Right lobe of liver (tissue), 6 donors: ENCODE measurements at regions of chr20 and their contacts with region 1.

Region 1: GRCh38 chr20:57596998-57597939 is 23.0 kb downstream of the ZBP1 start:
- DNase-seq: peak; percentile 75 to 78 (median 78)
- ATAC-seq: peak; percentile 43 to 57 (median 51)
- H3K4me3 ChIP-seq: no peak overlapping the region
- H3K27ac ChIP-seq: no peak overlapping the region
- H3K4me1 ChIP-seq: peaks cover 0 to 23% (median 11%) of the 10 kb centered on the region in 4 donors
- H3K27me3 ChIP-seq: no peaks in the 10 kb centered on the region
- CTCF ChIP-seq: peak; percentile 90 to 96 (median 94)
- POLR2A ChIP-seq: no peak

Region 2: DNA sequence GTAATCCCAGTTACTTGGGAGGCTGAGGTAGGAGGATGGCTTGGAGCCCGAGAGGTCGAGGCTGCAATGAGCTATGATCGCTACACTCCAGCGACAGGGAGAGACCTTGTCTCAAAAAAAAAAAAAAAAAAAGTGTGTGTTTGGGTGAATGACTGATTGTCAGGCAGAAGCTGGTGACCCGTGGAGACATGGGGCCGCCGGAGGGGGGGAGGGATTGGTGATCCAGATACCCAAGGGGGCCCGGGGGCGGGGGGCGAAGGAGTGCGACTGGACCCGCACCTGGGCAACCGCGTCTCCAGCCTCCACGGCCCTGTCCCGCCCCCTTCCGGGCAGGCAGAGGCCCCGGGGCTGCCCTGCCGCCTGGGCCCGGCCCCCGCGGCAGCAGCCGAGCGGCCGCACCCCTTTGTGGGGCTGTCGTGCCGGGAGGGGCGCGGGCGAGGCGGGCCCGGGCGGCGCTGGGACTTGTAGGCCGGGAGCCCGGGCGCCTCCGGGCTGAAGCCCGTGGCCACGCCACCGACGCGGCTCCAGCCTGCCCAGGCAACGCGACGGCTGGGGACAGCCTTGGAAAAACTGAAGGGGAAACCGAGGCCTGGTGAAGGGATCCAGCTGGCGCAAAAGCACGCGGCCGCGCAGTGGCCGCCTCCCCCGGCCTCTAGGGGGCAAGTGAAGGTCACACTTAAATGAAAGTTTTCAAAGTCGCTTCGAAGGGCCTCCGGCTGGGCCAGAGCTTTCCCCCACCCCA is 208.1 kb before region 1 on chr20:
- intact Hi-C with region 1: loop called in 1 of 2 experiments (anchors 10 kb)
- DNase-seq: peak; percentile 89
- ATAC-seq: peak; percentile 82 to 89 (median 84)
- H3K4me3 ChIP-seq: peak overlapping the region; percentile 20 to 53 (median 32)
- H3K27ac ChIP-seq: peak overlapping the region in 2 of 3 donors; percentile 31 to 43
- H3K4me1 ChIP-seq: peaks cover 0 to 19% (median 0%) of the 10 kb centered on the region in 4 donors
- H3K27me3 ChIP-seq: no peaks in the 10 kb centered on the region
- CTCF ChIP-seq: peak in 2 of 4 donors; percentile 19 to 35
- POLR2A ChIP-seq: peak; percentile 46

Region 3: DNA sequence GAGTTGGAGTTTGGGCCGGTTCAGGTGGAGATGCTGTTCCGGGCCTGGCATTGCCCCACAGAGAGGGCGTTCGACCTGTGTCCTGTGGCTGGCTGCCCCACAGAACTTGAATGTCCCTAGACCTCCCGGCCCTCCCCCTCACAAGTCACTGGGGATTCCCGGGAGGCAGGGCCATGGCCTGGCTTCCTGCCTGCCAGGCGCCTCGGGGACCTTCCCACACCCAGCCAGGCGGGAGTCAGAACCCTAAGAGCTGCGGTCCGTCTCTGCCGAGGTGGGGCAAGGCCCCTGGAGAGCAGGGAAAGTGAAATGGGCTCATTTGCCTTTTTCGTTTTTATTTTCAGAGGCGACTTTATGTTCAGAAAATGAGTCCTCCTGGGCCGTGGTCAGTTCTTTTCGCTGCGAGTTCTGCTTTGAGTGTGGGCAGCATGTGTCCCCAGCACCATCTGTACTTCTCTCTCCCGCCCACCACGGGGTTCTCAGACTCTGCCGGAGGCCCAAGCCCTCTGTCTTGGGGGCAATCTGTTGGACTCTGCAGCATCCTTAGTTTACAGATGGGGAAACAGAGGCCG is 197.6 kb before region 1 on chr20:
- intact Hi-C with region 1: loop called in 1 of 2 experiments (anchors 10 kb)
- DNase-seq: peak in 2 of 3 donors; percentile 64 to 68
- ATAC-seq: peak; percentile 7 to 79 (median 46)
- H3K4me3 ChIP-seq: no peak overlapping the region
- H3K27ac ChIP-seq: no peak overlapping the region
- H3K4me1 ChIP-seq: no peaks in the 10 kb centered on the region
- H3K27me3 ChIP-seq: no peaks in the 10 kb centered on the region
- CTCF ChIP-seq: no peak
- POLR2A ChIP-seq: no peak

Region 4: GRCh38 chr20:57514273-57514751 is 83.0 kb before region 1 on chr20:
- intact Hi-C with region 1: loop called (anchors 5 kb)
- DNase-seq: peak; percentile 63 to 77 (median 74)
- ATAC-seq: peak; percentile 92 to 97 (median 94)
- H3K4me3 ChIP-seq: no peak overlapping the region
- H3K27ac ChIP-seq: no peak overlapping the region
- H3K4me1 ChIP-seq: no peaks in the 10 kb centered on the region
- H3K27me3 ChIP-seq: no peaks in the 10 kb centered on the region
- CTCF ChIP-seq: peak; percentile 76 to 86 (median 79)
- POLR2A ChIP-seq: no peak

Region 5: GRCh38 chr20:57526087-57526884 is 71.0 kb before region 1 on chr20:
- intact Hi-C with region 1: no loop called
- DNase-seq: peak; percentile 45 to 66 (median 63)
- ATAC-seq: peak; percentile 2 to 48 (median 11)
- H3K4me3 ChIP-seq: no peak overlapping the region
- H3K27ac ChIP-seq: peak overlapping the region in 2 of 3 donors; percentile 98 to 99
- H3K4me1 ChIP-seq: peaks cover 0 to 30% (median 5%) of the 10 kb centered on the region in 4 donors
- H3K27me3 ChIP-seq: no peaks in the 10 kb centered on the region
- CTCF ChIP-seq: no peak
- POLR2A ChIP-seq: no peak

Region 6: GRCh38 chr20:58209652-58210397 is 612.6 kb after region 1 on chr20:
- intact Hi-C with region 1: loop called (anchors 5 kb)
- DNase-seq: peak; percentile 81 to 89 (median 86)
- ATAC-seq: peak; percentile 94 to 99 (median 98)
- H3K4me3 ChIP-seq: no peak overlapping the region
- H3K27ac ChIP-seq: no peak overlapping the region
- H3K4me1 ChIP-seq: no peaks in the 10 kb centered on the region
- H3K27me3 ChIP-seq: no peaks in the 10 kb centered on the region
- CTCF ChIP-seq: peak; percentile 100
- POLR2A ChIP-seq: no peak